RWPE1 (cell line): ENCODE measurements at regions of chr4 and their contacts with region 1.

Region 1: DNA sequence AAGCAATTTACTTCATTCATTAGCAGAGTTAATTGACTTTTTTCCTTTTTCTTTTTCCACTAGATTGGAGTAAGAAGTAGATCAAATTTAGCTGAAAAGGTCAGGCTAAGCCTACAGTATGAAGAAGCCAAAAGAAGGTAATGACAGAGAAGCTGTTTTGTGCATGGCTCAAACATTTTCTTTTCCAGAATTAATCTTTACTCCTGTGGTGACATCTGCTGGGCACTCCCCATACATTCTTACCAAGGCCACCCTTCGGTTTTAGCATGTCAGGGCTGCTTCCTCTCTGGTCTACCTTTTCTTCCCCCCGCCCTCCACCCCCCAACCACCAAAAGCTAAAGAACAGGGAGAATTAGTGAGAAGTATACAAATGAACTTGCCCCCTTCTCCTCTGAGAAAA is 70.2 kb downstream of the CLDN22 start:
- DNase-seq: peak; percentile 48
- H3K27ac ChIP-seq: no peak overlapping the region
- CTCF ChIP-seq: peak; percentile 43

Region 2: GRCh38 chr4:182955411-182955810 is 294.4 kb before region 1 on chr4:
- CTCF ChIA-PET with region 1: interaction called, 10 read pairs
- POLR2A ChIA-PET with region 1: no interaction called
- DNase-seq: no peak
- H3K27ac ChIP-seq: no peak overlapping the region
- CTCF ChIP-seq: no peak

Region 3: DNA sequence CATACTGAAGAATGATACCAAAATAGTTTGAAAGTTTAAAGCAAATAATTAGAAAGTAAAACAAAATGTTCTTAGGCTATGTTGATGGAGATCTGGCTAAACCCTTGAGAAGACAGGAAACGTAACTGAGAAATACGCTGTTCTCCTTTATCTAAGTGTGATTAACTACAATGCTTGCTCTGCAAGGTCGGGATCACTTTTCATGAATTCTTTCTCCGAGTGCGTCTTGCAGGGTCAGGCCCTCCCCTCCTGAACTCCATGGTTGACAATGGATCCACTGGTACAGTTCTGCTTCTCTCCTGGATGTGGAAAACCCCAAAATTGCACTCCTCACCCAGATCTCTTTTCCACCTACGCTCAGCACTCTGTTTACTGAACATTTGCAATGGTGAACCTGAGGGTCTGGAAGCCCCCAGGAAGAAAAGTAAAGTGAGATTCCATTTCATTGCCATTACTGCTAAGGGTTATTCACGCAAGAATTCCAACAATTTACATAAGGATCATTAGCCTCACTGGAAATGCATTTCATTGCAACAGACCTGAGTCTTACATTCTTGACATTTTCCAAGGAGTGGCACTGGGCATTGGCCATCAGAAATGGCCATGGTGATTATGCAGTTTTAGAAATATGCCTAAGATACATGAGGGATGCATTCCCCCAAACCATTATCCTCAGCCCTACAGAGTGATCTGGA is 175.4 kb before region 1 on chr4:
- CTCF ChIA-PET with region 1: interaction called, 21 read pairs
- POLR2A ChIA-PET with region 1: no interaction called
- DNase-seq: no peak
- H3K27ac ChIP-seq: no peak overlapping the region
- CTCF ChIP-seq: no peak

Region 4: GRCh38 chr4:183154701-183155391 is 95.0 kb before region 1 on chr4:
- CTCF ChIA-PET with region 1: no interaction called
- POLR2A ChIA-PET with region 1: no interaction called
- DNase-seq: no peak
- H3K27ac ChIP-seq: no peak overlapping the region
- CTCF ChIP-seq: no peak

Region 5: DNA sequence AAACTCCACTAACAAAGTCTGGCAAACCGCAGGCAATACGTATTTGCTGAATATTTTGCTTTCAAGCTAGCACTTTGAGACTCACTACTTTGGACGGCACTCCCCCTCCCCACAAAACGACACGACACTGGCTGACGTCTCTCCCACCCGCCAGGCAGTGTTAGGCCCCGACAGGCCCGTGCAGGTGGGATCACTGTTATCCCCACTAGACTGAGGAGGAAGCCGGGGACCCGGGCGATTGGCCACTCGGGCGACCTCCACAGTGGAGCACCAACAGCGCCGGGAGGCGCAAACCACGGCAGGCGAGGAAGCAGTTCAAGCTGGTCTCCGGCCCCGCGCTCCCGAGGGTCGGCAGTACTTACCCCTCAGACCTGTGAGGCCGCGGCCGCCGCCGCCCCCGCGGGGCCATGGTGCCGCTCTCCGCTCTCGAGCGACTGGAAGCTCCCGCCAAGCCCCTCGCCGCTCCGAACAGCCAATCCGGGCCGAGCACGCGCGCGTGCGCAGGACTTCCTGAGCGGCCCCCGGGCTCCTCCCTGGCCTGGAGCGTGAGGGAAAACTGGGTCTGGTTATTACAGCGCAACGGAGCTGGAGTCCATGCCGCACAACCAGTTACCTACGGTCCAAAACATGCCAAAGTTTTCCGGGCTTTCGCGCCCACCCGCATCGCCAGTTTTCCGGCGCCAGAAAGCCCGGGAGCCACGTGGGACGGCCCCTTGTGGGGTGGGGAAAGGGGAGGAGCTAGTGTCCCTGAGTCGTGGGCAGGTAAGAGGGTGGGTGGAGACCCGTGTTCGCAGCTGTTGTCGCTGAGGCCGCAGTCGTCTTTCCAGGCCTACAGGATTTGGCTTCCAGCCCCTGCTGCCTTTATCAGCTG is 1484.0 kb after region 1 on chr4 and contains the start of gene CENPU:
- CTCF ChIA-PET with region 1: no interaction called
- POLR2A ChIA-PET with region 1: no interaction called
- DNase-seq: peak; percentile 99
- H3K27ac ChIP-seq: peak within 1 kb of the TSS; percentile 95
- CTCF ChIP-seq: no peak